ENCODE measurements at regions of chr12 and their contacts with region 1.

Region 1: GRCh38 chr12:39103552-39104165 is 198.3 kb upstream of the CPNE8 start:
- DNase-seq: peak; percentile 59 to 84
- H3K4me3 ChIP-seq: no peak overlapping the region
- H3K4me1 ChIP-seq: peaks cover 13% of the 10 kb centered on the region
- H3K27me3 ChIP-seq: no peaks in the 10 kb centered on the region

Region 2: DNA sequence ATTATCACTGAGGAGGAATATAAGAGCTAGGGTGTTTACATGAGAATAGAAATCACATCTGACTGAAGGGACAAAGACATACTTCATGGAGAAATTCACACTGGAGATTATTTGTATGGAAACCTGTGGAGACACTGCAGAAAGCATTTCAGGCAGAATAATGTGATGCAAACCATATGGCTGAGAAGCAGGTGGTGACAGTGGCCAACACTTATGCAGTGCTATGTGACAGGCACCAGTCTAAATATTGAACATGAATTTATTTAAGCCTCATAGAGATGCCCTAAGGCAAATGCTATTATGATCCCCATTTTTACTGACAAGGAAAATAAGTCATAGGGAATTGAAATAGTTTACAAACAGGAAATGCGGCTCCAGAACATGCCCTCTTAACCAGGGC is 770.8 kb before region 1 on chr12:
- in situ Hi-C with region 1: loop called (anchors 25 kb)
- DNase-seq: no peak
- H3K4me3 ChIP-seq: no peak overlapping the region
- H3K4me1 ChIP-seq: peaks cover 5% of the 10 kb centered on the region; the same call in 1 of the 2 replicates
- H3K27me3 ChIP-seq: no peaks in the 10 kb centered on the region

Region 3: GRCh38 chr12:39272871-39273770 is 169.5 kb after region 1 on chr12:
- in situ Hi-C with region 1: loop called (anchors 25 kb)
- DNase-seq: peak; percentile 67 to 73
- H3K4me3 ChIP-seq: no peak overlapping the region
- H3K4me1 ChIP-seq: 0 out of 2 replicates have a peak, but pooled peaks cover 2% of the 10 kb centered on the region
- H3K27me3 ChIP-seq: no peaks in the 10 kb centered on the region

Region 4: DNA sequence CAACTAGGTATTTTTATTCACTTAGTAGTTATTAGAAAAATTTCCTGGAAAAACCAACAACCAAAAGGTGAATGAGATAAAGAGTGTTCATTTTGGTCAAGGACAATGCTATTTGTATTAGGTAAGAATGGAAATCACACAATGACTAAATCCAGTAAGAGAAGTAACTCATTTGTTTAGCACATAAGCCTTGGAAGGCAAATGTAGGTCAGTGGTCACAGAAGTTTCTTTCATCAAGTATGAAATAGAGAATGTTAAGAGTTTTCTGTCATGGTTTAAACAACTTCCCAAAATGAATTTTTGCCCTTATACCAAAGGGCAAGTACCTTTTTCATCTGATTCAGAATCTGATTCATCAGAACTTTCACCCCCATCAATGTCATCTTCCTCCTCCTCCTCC is 237.5 kb after region 1 on chr12:
- in situ Hi-C with region 1: no loop called
- DNase-seq: no peak
- H3K4me3 ChIP-seq: no peak overlapping the region
- H3K4me1 ChIP-seq: no peaks in the 10 kb centered on the region
- H3K27me3 ChIP-seq: no peaks in the 10 kb centered on the region